ENCODE measurements at regions of chr7 and their contacts with region 1.

Region 1: GRCh38 chr7:129210256-129210988 is 14.4 kb upstream of the AHCYL2 start:
- DNase-seq: peak; percentile 86 to 95
- ATAC-seq: peak; percentile 86
- H3K4me3 ChIP-seq: no peak overlapping the region
- H3K27ac ChIP-seq: no peak overlapping the region
- H3K4me1 ChIP-seq: no peaks in the 10 kb centered on the region
- H3K27me3 ChIP-seq: no peaks in the 10 kb centered on the region

Region 2: DNA sequence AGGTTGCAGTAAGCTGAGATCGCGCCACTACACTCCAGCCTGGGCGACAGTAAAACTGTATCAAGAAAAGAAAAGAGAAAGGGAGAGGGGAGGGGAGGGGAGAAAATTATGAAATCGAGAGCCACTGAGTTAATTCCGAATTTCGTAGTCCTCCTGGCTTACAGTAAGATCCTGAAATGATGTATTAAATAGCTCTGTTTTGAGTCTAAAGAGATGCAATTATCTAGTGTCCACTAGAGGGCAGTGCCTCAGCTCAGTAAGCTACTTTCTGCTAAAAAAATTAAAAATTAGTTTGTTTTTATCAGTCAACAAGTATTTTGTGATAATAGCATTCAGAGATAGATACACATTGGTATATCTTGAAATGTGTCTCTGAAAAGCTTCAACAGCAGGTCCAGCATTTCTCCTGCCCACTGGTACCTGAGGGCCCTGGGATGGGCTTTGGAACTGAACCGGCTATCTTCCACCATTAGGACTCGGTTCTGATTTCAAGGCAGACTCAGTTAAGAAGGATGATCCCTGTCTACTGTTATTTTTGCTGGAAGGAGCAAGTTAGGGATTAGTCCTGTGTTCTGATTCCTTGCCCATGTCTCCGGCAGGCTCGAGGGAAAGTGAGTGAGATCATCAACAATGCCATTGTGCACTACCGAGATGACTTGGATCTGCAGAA is 46.4 kb before region 1 on chr7:
- intact Hi-C with region 1: loop called (anchors 1 to 2 kb)
- DNase-seq: no peak
- ATAC-seq: no peak
- H3K4me3 ChIP-seq: no peak overlapping the region
- H3K27ac ChIP-seq: no peak overlapping the region
- H3K4me1 ChIP-seq: no peaks in the 10 kb centered on the region
- H3K27me3 ChIP-seq: no peaks in the 10 kb centered on the region

Region 3: DNA sequence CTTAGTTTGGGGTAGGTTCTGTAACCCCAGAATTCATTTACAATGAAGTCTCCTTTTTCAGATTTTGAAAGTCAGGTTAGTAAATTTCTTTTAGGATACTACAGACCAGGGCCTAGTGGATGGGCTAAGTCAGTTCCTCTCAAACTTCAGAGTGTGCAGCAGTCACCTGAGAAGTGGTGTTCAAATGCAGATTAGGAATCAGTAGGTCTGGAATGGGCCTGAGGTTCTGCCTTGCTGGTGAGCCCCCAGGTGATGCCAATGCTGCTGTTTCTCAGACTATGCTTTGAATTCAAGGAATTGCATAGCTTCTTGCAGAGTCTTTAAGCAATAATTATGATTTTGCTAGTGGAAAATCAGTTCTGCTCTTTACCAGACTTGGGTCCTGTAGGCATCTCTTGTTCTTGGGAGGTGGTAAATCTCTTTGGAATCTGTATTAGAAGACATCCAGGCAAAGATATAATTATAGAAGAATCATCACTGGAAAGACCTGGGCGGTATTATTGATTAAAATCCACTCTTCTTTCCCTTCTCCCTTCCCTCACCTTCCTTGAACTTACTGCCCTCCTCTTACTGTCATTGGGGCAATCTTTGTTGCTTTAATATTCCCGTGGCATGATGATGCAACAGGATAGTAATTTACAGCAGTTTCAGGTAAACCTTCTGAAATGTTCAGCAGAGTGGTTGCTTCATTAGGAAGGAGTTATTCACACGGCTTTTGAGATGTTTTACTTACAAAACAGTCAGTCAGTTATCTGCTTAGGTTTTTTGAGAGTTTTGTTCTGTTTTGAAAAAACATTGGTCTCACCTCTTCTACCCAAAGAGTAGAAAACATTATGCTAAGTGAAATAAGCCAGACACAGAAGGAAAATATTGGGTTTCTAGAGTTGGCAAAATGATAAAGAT is 488.3 kb after region 1 on chr7:
- intact Hi-C with region 1: no loop called
- DNase-seq: no peak
- ATAC-seq: no peak
- H3K4me3 ChIP-seq: no peak overlapping the region
- H3K27ac ChIP-seq: no peak overlapping the region
- H3K4me1 ChIP-seq: peaks cover 2 to 4% of the 10 kb centered on the region in 2 donors
- H3K27me3 ChIP-seq: no peaks in the 10 kb centered on the region